Right ventricle myocardium inferior (tissue), 1 donor: ENCODE measurements at regions of chr15 and their contacts with region 1.

Region 1: GRCh38 chr15:43329960-43330779 is at the start of gene LCMT2:
- DNase-seq: peak; percentile 95
- ATAC-seq: peak; percentile 98
- total RNA-seq, gene LCMT2: 6.0 TPM

Region 2: GRCh38 chr15:43225201-43225949 is 104.8 kb before region 1 on chr15:
- intact Hi-C with region 1: no loop called
- DNase-seq: no peak
- ATAC-seq: peak; percentile 82

Region 3: GRCh38 chr15:43370975-43371974 is 41.1 kb after region 1 on chr15 and contains the starts of genes TUBGCP4 and ZSCAN29:
- intact Hi-C with region 1: loop called (anchors 2 kb)
- DNase-seq: peak; percentile 87
- ATAC-seq: peak; percentile 97
- total RNA-seq, gene TUBGCP4: 12.5 TPM
- total RNA-seq, gene ZSCAN29: 13.1 TPM